Endothelial cell of umbilical vein (primary cell): ENCODE measurements at regions of chr20 and their contacts with region 1.

Region 1: GRCh38 chr20:884983-885952 is 30.9 kb downstream of the ANGPT4 start:
- DNase-seq: peak; percentile 19
- H3K4me3 ChIP-seq: no peak overlapping the region
- H3K27ac ChIP-seq: no peak overlapping the region
- H3K4me1 ChIP-seq: no peaks in the 10 kb centered on the region
- H3K27me3 ChIP-seq: peaks cover 6 to 12% of the 10 kb centered on the region in 2 experiments
- CTCF ChIP-seq: no peak
- POLR2A ChIP-seq: no peak

Region 2: DNA sequence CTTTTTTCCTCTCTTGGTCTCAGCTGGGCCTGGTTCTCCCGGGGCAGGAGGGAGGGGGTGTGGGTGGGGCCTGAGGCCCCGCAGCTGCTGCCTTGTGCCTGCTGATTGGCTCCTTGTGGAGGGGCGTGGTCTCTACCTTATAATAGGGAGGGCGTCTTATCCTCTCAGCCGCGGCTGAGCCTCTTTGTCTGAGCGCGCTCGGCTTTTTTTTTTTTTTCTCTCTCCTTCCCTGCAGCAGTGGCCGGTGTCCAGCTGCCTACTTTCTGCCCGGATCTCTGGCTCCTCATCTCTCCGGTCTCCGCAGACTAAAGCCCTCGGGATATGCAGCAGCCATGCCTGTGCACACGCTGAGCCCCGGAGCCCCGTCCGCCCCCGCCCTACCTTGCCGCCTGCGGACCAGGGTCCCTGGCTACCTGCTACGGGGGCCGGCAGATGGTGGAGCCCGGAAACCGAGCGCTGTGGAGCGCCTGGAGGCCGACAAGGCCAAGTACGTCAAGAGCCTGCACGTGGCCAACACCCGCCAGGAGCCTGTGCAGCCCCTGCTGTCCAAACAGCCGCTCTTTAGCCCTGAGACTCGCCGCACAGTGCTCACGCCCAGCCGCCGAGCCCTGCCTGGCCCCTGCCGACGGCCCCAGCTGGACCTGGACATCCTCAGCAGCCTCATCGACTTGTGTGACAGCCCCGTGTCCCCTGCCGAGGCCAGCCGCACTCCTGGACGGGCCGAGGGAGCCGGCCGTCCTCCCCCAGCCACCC is 40.6 kb before region 1 on chr20:
- CTCF ChIA-PET with region 1: no interaction called
- POLR2A ChIA-PET with region 1: no interaction called
- dilution Hi-C with region 1: no loop called
- intact Hi-C with region 1: loop called (anchors 5 kb)
- DNase-seq: peak; percentile 88
- H3K4me3 ChIP-seq: peak overlapping the region in 2 of 3 experiments; percentile 11 to 29
- H3K27ac ChIP-seq: no peak overlapping the region
- H3K4me1 ChIP-seq: peaks cover 28% of the 10 kb centered on the region
- H3K27me3 ChIP-seq: no peaks in the 10 kb centered on the region
- CTCF ChIP-seq: no peak
- POLR2A ChIP-seq: no peak